Stomach (tissue), 19 donors: ENCODE measurements at regions of chr14 and their contacts with region 1.

Region 1: DNA sequence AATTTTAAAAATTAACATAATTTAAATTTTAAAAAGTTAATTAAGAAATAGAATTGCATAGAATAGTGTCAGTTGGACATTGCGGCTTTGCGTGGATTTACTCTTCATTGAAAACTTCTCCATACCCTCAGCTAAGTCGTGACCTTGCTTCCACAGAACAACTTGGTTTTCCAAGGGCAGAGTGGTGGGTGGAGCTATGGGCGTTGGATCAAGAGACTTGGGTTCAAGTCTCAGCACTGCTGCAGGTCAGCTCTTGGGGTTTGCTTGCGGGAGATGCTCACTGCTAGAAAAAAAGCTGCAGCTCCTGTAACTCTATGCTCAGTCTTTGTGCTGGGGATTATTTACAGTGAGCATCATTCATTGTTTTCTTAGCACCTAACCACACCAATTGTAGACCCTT is 133.7 kb downstream of the PRIMA1 start:
- DNase-seq: no peak
- H3K4me3 ChIP-seq: no peak overlapping the region
- H3K27ac ChIP-seq: no peak overlapping the region
- H3K4me1 ChIP-seq: no peaks in the 10 kb centered on the region
- H3K27me3 ChIP-seq: peaks cover 0 to 17% (median 0%) of the 10 kb centered on the region in 3 donors
- CTCF ChIP-seq: no peak
- EP300 ChIP-seq: no peak
- POLR2A ChIP-seq: no peak

Region 2: DNA sequence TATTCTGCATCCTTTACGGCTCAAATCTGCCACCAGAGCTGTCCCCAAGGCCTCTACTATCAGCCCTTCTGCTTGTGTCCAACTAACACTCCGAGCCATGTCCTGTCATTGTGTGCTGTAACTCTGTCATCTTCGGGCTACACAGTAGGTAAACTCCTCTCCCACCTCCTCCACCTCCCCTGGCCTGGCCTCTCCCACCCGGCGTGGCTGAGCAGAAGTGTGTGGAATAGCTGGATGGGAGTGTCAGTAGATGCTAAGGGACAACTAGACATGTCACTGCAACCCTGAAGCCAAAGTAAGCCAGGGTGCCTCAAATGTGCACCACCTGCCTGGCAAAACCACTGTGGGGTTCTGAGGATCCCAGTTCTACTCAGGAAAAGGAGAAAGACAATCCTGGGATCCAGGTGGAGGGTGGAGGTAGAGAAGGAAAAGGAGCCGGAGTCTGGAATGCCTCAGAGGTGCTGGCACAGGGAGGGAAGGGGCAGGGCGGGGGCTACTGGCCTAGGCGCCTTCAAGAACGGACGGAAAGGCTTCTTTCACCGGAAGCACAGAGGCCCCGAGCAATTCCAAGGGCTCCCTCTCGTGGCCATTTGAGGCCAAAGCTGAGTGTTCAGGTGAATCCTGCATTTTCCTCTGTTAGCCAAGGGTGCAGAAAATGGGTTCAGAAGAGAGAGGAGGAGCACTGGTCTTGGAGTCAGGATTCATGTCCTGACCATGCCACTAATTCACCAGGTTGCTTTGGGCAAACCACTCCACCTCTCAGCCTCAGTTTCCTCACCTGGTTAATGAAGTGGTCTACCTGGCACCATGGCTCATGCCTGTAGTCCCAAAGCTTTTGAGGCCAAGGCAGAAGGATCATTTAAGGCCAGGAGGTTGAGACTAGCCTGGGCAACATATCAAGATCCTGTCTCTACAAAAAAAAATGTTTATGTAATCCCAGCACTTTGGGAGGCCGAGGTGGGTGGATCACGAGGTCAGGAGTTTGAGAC is 252.0 kb after region 1 on chr14:
- intact Hi-C with region 1: loop called (anchors 5 kb)
- DNase-seq: peak; percentile 82
- H3K4me3 ChIP-seq: no peak overlapping the region
- H3K27ac ChIP-seq: no peak overlapping the region
- H3K4me1 ChIP-seq: peaks cover 0 to 22% (median 12%) of the 10 kb centered on the region in 4 donors
- H3K27me3 ChIP-seq: peaks cover 0 to 7% (median 0%) of the 10 kb centered on the region in 3 donors
- CTCF ChIP-seq: peak in 5 of 7 experiments; percentile 58 to 66 (median 65)
- EP300 ChIP-seq: no peak
- POLR2A ChIP-seq: no peak